Common myeloid progenitor, CD34-positive (primary cell): ENCODE measurements at regions of chr9 and their contacts with region 1.

Region 1: DNA sequence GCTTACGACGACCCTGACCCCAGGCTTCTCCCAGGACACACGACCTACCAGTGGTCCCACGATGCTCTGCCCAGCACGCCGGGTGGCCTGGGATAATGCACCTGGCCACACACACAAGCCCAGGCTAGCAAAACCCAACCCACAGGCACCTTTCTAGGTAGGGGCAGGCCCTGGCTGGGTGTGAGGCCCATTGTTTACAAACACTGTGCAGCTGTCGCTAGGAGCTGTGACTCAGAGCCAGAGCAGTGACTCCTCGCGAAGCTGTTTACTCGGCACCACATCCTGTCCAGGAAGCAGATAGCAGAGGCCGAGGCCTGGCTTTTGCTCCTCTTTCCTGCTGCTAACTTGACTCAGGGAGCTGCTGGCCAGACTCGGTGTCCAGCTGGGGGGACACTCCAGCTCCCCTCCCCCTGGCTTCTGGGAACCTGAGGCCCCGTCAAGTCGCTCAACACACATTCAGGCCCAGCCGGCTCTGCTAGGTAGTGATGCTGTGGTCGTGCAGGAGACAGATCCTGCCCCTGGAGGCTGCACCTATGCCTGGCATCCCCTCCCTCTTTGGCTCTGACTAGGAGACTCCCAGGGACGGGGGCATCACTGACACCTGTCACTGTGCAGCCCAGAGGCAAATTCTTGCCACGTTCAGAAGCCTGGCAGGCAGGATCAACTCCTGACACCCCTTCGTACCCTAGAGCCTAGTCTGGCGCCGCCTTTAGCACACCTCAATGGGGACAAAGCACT is 12.8 kb upstream of the RALGDS start:
- DNase-seq: peak; percentile 96 to 98 (median 97)
- H3K4me3 ChIP-seq: peak overlapping the region in 2 of 7 experiments; percentile 25 to 42
- H3K27ac ChIP-seq: peak overlapping the region; percentile 97 to 98
- H3K4me1 ChIP-seq: peaks cover 3 to 72% (median 59%) of the 10 kb centered on the region in 4 experiments
- H3K27me3 ChIP-seq: no peaks in the 10 kb centered on the region

Region 2: DNA sequence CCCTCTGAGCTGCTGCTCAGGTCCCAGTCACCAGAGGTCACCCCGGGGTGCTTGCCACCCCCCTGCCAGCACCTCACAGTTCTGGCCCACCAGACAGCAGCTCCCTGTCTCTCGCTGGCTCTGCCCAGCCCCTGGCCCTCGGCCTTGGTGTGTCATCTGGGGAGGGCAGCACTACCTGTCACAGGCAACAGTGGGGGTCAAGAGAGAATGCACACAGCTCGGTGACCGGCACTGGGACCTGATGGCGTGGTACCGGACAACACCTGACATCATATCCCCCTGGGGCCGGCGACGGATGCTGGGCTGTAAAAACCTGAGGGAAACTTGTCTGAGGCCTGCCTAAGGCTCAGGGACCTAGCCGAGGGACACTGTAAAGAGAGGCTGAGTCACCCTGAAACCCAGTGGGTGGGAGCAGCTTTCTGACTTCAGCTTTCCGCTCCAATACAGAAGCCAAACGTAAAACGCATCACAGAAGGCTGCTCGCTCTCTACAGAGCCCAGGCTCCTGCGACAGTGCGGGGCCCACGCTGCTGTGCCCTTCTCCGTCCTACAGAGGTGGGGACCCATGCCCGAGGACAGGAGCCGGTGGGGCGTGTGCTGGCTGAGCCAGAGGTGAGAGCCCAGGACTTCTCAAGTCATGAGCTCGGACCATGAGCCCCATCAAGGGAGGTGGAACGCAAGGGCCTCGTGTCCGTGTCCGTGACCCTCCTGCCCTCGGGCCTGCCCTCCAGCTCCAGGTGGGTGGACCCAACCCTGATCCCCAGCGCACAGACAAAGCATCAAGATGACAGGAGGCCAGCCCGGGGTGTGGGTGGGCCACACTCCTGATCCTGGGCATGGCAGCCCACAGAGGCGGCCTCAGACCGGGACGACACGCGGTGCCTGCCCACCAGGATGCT is 18.2 kb before region 1 on chr9:
- CTCF ChIA-PET with region 1: interaction called, 37 read pairs
- POLR2A ChIA-PET with region 1: interaction called, 66 read pairs
- DNase-seq: peak in 2 of 3 donors; percentile 46 to 50
- H3K4me3 ChIP-seq: peak overlapping the region in 3 of 7 experiments; percentile 9 to 21 (median 20)
- H3K27ac ChIP-seq: peak overlapping the region in 1 of 2 experiments; percentile 34
- H3K4me1 ChIP-seq: peaks cover 2 to 91% (median 83%) of the 10 kb centered on the region in 4 experiments
- H3K27me3 ChIP-seq: no peaks in the 10 kb centered on the region

Region 3: GRCh38 chr9:133121198-133121939 is 12.5 kb before region 1 on chr9 and contains the start of gene RALGDS:
- CTCF ChIA-PET with region 1: interaction called, 12 read pairs
- POLR2A ChIA-PET with region 1: interaction called, 15 read pairs
- DNase-seq: peak; percentile 85 to 93 (median 92)
- H3K4me3 ChIP-seq: peak within 1 kb of the TSS; percentile 33 to 80 (median 68)
- H3K27ac ChIP-seq: peak within 1 kb of the TSS; percentile 68 to 74
- H3K4me1 ChIP-seq: peaks cover 0 to 94% (median 81%) of the 10 kb centered on the region in 4 experiments
- H3K27me3 ChIP-seq: no peaks in the 10 kb centered on the region